Gastrocnemius medialis (tissue), 4 donors: ENCODE measurements at regions of chr11 and their contacts with region 1.

Region 1: GRCh38 chr11:60841797-60842667 is at the start of gene CCDC86:
- DNase-seq: peak; percentile 94 to 96
- ATAC-seq: peak; percentile 88 to 89
- H3K4me3 ChIP-seq: peak within 1 kb of the TSS; percentile 76 to 95 (median 88)
- H3K27ac ChIP-seq: peak within 1 kb of the TSS; percentile 79 to 87 (median 83)
- H3K4me1 ChIP-seq: peaks cover 25 to 31% of the 10 kb centered on the region in 2 donors
- H3K27me3 ChIP-seq: no peaks in the 10 kb centered on the region
- CTCF ChIP-seq: peak in 2 of 5 experiments; percentile 40 to 50
- POLR2A ChIP-seq: peak; percentile 34 to 50
- total RNA-seq, gene CCDC86: 23.8 to 36.2 (median 33.2) TPM

Region 2: GRCh38 chr11:60878245-60879101 is 36.4 kb after region 1 on chr11:
- in situ Hi-C with region 1: no loop called
- intact Hi-C with region 1: loop called (anchors 2 kb)
- DNase-seq: no peak
- ATAC-seq: peak; percentile 55 to 74
- H3K4me3 ChIP-seq: no peak overlapping the region
- H3K27ac ChIP-seq: peak overlapping the region; percentile 56 to 78 (median 70)
- H3K4me1 ChIP-seq: peaks cover 47 to 53% of the 10 kb centered on the region in 2 donors
- H3K27me3 ChIP-seq: no peaks in the 10 kb centered on the region
- CTCF ChIP-seq: no peak
- POLR2A ChIP-seq: no peak

Region 3: DNA sequence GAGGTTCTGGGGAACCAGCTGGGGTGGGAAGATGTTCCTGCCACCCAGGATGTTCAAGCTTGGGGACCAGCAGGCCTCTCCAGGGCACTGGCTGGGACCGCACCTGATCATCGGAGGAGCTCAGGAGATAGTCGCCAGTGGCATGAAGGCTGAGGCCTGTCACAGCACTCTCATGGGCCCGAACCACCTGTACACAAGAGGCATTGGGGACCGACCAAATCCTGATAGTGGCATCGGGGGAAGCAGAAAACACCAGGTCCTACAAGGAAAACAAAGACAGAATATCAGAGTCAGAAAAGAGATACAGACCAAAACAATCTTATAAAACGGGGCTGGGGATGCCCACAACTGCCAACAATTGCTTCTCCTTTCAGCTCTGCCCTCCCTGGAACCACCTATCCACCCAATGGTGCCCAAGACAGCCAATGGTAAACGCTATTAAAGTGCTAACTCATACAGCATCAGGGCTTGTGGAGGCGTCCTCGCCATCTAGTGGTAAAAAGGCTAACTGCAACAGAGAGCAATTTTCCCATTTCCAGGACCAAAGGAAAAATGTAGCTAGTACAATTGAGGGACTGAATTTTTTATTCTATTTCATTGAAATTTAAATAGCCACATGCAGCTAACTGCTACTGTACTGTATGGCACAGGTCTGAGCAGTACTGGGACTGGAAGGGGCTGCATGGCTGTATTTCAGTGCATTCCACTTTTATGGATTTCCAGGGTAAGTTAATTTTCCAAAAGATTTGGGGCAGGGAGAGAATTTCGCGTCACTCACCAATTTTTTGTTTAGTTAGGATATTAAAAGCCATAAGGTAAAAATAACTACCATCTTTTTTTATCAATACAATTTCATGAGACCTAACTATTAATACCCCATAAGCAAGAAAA is 57.3 kb after region 1 on chr11:
- in situ Hi-C with region 1: loop called in 2 of 4 experiments (anchors 5 kb)
- intact Hi-C with region 1: no loop called
- DNase-seq: peak in 1 of 2 donors; percentile 49
- ATAC-seq: peak; percentile 78 to 96
- H3K4me3 ChIP-seq: no peak overlapping the region
- H3K27ac ChIP-seq: peak overlapping the region; percentile 0 to 59 (median 52)
- H3K4me1 ChIP-seq: peaks cover under 1 to 10% of the 10 kb centered on the region in 2 donors
- H3K27me3 ChIP-seq: no peaks in the 10 kb centered on the region
- CTCF ChIP-seq: peak; percentile 82 to 97 (median 92)
- POLR2A ChIP-seq: no peak

Region 4: GRCh38 chr11:61129639-61130523 is 287.8 kb after region 1 on chr11:
- in situ Hi-C with region 1: loop called in 1 of 4 experiments (anchors 25 kb)
- intact Hi-C with region 1: no loop called
- DNase-seq: peak; percentile 53 to 69
- ATAC-seq: peak; percentile 58 to 83
- H3K4me3 ChIP-seq: no peak overlapping the region
- H3K27ac ChIP-seq: peak overlapping the region in 1 of 4 donors; percentile 28
- H3K4me1 ChIP-seq: peaks cover 11 to 14% of the 10 kb centered on the region in 2 donors
- H3K27me3 ChIP-seq: no peaks in the 10 kb centered on the region
- CTCF ChIP-seq: peak; percentile 82 to 96 (median 92)
- POLR2A ChIP-seq: no peak

Region 5: GRCh38 chr11:61187505-61188130 is 345.6 kb after region 1 on chr11:
- in situ Hi-C with region 1: loop called in 3 of 4 experiments (anchors 25 kb)
- intact Hi-C with region 1: no loop called
- DNase-seq: peak in 1 of 2 donors; percentile 42
- ATAC-seq: peak in 1 of 2 donors; percentile 64
- H3K4me3 ChIP-seq: no peak overlapping the region
- H3K27ac ChIP-seq: no peak overlapping the region
- H3K4me1 ChIP-seq: no peaks in the 10 kb centered on the region
- H3K27me3 ChIP-seq: peaks cover 0 to 4% (median 0%) of the 10 kb centered on the region in 3 donors
- CTCF ChIP-seq: peak; percentile 65 to 87 (median 81)
- POLR2A ChIP-seq: no peak